ENCODE measurements at regions of chr3 and their contacts with region 1.

Region 1: DNA sequence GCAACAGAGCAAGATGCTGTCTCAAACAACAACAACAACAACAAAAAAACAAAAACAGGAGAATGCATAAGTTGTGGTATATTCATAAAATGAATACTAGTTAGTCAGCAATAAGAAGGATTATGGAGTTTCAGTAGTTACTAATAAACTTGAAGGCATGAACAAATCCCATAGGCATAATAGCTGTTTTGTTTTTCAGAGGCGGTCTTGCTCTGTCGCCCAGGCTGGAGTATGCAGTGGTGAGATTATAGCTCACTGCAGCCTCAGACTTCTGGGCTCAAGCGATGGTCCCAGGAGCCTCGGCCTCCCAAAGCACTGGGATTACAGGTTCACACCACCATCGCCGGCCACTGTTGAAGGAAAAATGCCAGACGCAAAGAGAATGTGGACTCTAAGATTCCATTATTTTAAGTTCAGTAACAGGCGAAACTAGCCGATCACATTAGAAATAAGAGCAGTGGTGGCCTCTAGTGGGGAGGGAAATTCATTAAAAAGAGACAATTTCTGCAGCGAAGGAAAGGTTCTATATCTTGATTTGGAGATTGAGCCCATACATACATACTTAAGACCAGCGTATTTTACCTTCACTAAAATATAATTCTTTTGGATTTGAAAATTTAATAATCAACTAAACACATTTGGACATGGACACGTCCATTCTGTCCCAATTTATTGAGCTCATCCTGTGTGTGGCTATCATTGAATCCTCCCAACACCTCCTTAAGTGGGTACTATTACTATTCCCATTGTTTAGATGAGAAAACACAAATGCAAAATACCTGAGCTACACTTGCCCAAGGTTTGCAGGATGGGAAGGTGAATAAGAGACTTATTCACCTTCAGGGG is 27.4 kb upstream of the HDAC11 start:
- DNase-seq: peak; percentile 74
- ATAC-seq: no peak
- H3K4me3 ChIP-seq: peak overlapping the region in 4 of 5 experiments; percentile 54 to 65 (median 59)
- H3K4me3 Mint-ChIP-seq: peak overlapping the region; percentile 87
- H3K27ac ChIP-seq: peak overlapping the region; percentile 67 to 78
- H3K27ac Mint-ChIP-seq: peak overlapping the region; percentile 84
- H3K4me1 ChIP-seq: peaks cover 6 to 16% of the 10 kb centered on the region in 2 donors
- H3K4me1 Mint-ChIP-seq: peaks cover 18% of the 10 kb centered on the region
- H3K27me3 ChIP-seq: no peaks in the 10 kb centered on the region
- H3K27me3 Mint-ChIP-seq: no peaks in the 10 kb centered on the region
- CTCF ChIP-seq: peak; percentile 84

Region 2: DNA sequence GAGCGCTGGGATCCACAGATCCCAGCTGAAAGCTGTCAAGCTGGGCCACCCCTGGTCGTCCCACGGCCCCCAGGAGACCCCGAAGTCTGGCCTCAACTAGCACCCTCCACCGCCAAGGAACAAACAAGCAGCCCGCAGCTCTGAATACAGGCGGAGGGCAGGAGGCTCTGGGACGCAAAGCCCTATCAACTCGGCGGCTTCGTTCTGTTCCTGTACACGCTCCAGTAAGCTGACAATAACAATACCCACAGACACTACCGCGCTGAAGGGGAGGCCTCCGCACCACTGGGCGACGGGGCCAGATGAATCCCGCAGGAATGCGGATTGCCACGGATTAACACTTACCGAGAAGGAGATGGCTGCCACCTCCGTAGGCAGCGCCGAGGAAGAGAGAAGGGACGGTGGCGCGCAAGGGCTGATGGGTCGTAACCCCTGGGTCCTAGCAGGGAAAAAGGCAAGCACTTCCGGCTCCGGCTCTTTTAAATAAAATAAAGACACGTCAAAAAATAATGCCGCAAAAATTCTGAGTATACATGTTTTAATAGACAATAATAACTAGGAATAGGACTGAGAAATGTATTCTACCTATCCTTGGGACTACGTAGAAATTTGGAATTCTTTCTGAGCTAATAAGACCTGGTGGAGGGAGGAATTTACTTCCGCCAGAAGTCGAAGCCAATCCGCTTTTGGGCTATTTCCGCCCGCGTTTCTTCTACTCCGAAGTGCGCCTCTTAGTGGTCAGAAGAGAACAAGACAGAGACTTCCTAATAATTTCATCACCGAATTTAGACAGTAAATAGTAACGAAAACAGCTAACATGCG is 611.4 kb before region 1 on chr3 and contains the start of gene RPL32:
- CTCF ChIA-PET with region 1: no interaction called
- POLR2A ChIA-PET with region 1: no interaction called
- intact Hi-C with region 1: loop called (anchors 1 kb)
- DNase-seq: peak; percentile 96
- ATAC-seq: peak; percentile 92
- H3K4me3 ChIP-seq: peak within 1 kb of the TSS; percentile 83 to 99 (median 90)
- H3K4me3 Mint-ChIP-seq: peak within 1 kb of the TSS; percentile 99
- H3K27ac ChIP-seq: peak within 1 kb of the TSS; percentile 96 to 97
- H3K27ac Mint-ChIP-seq: peak within 1 kb of the TSS; percentile 99
- H3K4me1 ChIP-seq: peaks cover 14 to 30% of the 10 kb centered on the region in 2 donors
- H3K4me1 Mint-ChIP-seq: peaks cover 45% of the 10 kb centered on the region
- H3K27me3 ChIP-seq: no peaks in the 10 kb centered on the region
- H3K27me3 Mint-ChIP-seq: no peaks in the 10 kb centered on the region
- CTCF ChIP-seq: peak; percentile 86
- total RNA-seq, gene RPL32: 2,575 and 2,756 TPM in 2 replicates

Region 3: DNA sequence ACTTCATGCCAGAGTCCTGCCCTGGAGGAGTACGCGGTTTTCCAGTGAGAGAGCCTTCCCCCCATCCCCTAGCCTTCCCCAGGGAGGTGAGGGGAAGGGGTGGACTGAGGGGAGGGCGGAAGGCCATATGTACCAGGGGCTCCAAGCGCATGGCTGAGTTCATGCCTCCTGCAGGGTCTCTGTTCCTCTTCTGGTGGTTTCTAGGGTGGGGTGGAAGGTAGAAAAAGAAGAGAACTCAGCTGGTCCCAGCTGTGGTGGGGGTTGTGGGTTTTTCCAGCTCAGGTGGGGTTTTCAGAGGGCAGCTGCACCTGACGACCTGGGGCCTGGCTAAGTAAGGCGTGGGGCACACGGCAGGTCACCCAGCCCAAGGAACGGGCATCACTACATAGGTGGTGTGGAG is 368.8 kb before region 1 on chr3:
- CTCF ChIA-PET with region 1: interaction called, 114 read pairs
- POLR2A ChIA-PET with region 1: interaction called, 6 read pairs
- intact Hi-C with region 1: no loop called
- DNase-seq: peak; percentile 89
- ATAC-seq: peak; percentile 58
- H3K4me3 ChIP-seq: peak overlapping the region in 1 of 5 experiments; percentile 17
- H3K4me3 Mint-ChIP-seq: peak overlapping the region; percentile 82
- H3K27ac ChIP-seq: peak overlapping the region; percentile 86 to 94
- H3K27ac Mint-ChIP-seq: peak overlapping the region; percentile 95
- H3K4me1 ChIP-seq: peaks cover 83 to 98% of the 10 kb centered on the region in 2 donors
- H3K4me1 Mint-ChIP-seq: peaks cover 90% of the 10 kb centered on the region
- H3K27me3 ChIP-seq: no peaks in the 10 kb centered on the region
- H3K27me3 Mint-ChIP-seq: no peaks in the 10 kb centered on the region
- CTCF ChIP-seq: no peak

Region 4: GRCh38 chr3:13282986-13283876 is 169.5 kb before region 1 on chr3:
- CTCF ChIA-PET with region 1: interaction called, 7 read pairs
- POLR2A ChIA-PET with region 1: no interaction called
- intact Hi-C with region 1: loop called (anchors 2 kb)
- DNase-seq: peak; percentile 62
- ATAC-seq: peak; percentile 74
- H3K4me3 ChIP-seq: peak overlapping the region in 4 of 5 experiments; percentile 3 to 47 (median 36)
- H3K4me3 Mint-ChIP-seq: peak overlapping the region; percentile 86
- H3K27ac ChIP-seq: no peak overlapping the region
- H3K27ac Mint-ChIP-seq: no peak overlapping the region
- H3K4me1 ChIP-seq: peaks cover 21% of the 10 kb centered on the region in 2 donors
- H3K4me1 Mint-ChIP-seq: peaks cover 13% of the 10 kb centered on the region
- H3K27me3 ChIP-seq: peaks cover 2 to 58% (median 37%) of the 10 kb centered on the region in 4 experiments
- H3K27me3 Mint-ChIP-seq: peaks cover 46% of the 10 kb centered on the region
- CTCF ChIP-seq: peak; percentile 49

Region 5: DNA sequence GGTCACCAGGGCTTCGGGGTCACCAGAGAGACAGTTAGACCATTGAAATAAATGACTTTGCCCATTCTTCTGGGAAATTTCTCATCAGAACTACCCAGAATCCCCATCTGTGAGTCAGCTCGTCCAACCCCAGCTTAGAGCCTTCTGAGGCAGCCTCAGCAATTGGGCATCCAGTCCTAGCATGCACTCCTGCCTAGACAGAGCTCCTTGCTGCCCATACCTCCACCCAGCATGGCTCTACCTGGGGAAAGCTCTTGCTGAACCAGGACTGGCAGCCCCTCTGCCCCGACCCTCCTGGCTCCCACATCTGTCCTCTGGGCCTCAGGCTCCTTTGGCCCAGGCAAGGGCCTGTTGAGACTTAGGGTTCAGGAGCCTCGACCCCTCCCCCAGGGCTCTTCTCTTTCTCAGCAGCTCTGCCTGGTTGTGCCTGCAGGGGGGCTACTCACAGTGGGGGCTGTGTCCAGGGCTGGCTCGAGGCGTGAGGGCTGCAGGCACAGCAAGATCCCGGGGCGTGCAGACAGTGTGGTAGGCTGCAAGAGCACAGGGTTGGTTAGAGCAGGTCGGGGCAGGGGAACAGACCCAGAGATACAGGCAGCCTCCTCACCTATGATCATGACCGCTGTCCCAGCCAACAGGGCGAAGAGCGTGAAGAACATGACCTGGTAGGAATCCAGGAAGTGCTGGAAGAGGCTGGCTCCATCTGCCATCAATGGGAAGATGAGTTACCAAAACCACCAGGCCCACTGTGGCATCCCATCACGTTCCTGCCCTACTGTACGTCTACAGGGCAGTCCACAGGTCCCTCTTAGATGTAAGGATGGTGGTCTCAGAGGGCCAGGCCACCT is 133.9 kb before region 1 on chr3:
- CTCF ChIA-PET with region 1: no interaction called
- POLR2A ChIA-PET with region 1: no interaction called
- intact Hi-C with region 1: no loop called
- DNase-seq: no peak
- ATAC-seq: no peak
- H3K4me3 ChIP-seq: no peak overlapping the region
- H3K4me3 Mint-ChIP-seq: no peak overlapping the region
- H3K27ac ChIP-seq: no peak overlapping the region
- H3K27ac Mint-ChIP-seq: no peak overlapping the region
- H3K4me1 ChIP-seq: no peaks in the 10 kb centered on the region
- H3K4me1 Mint-ChIP-seq: no peaks in the 10 kb centered on the region
- H3K27me3 ChIP-seq: no peaks in the 10 kb centered on the region
- H3K27me3 Mint-ChIP-seq: no peaks in the 10 kb centered on the region
- CTCF ChIP-seq: no peak

Region 6: GRCh38 chr3:13364602-13365271 is 88.0 kb before region 1 on chr3:
- CTCF ChIA-PET with region 1: interaction called, 11 read pairs
- POLR2A ChIA-PET with region 1: no interaction called
- intact Hi-C with region 1: no loop called
- DNase-seq: no peak
- ATAC-seq: no peak
- H3K4me3 ChIP-seq: no peak overlapping the region
- H3K4me3 Mint-ChIP-seq: no peak overlapping the region
- H3K27ac ChIP-seq: no peak overlapping the region
- H3K27ac Mint-ChIP-seq: no peak overlapping the region
- H3K4me1 ChIP-seq: no peaks in the 10 kb centered on the region
- H3K4me1 Mint-ChIP-seq: no peaks in the 10 kb centered on the region
- H3K27me3 ChIP-seq: no peaks in the 10 kb centered on the region
- H3K27me3 Mint-ChIP-seq: no peaks in the 10 kb centered on the region
- CTCF ChIP-seq: no peak

Region 7: DNA sequence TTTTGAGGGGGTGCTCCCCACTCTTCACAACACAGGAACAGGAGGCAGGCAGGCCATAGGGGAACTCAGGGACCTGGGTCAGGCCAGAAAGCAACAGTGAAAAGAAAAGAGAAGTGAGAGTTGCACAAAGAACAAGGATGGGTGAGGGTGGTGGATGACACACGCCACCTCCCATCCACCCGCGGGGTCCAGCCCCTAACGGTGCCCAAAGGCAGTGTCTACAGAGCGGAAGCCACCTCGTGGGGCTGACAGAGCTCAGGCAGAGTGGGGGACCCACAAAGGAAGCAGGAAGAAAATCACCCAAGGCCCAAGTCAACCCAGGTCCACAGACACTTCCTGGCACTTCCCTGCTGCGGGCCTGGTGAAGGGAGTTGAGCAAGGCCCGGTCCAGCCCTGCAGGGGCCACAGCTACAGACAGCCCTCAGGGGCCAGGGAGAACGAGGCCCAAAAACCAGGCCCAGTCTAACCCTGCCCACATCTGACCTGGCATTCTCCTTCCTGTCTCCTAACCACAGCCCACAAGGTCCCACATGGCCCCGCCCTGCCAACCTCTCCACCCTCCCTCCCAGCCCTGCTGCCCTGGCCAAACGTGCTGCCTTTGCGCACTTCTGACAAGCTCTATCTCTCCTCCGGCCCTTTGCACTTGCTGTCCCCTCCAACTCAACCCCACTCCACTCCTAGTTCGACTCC is 38.5 kb before region 1 on chr3:
- CTCF ChIA-PET with region 1: interaction called, 66 read pairs
- POLR2A ChIA-PET with region 1: interaction called, 18 read pairs
- intact Hi-C with region 1: loop called (anchors 1 kb)
- DNase-seq: peak; percentile 94
- ATAC-seq: peak; percentile 92
- H3K4me3 ChIP-seq: peak overlapping the region in 4 of 5 experiments; percentile 21 to 33 (median 29)
- H3K4me3 Mint-ChIP-seq: peak overlapping the region; percentile 73
- H3K27ac ChIP-seq: peak overlapping the region; percentile 90 to 91
- H3K27ac Mint-ChIP-seq: peak overlapping the region; percentile 98
- H3K4me1 ChIP-seq: peaks cover 60 to 72% of the 10 kb centered on the region in 2 donors
- H3K4me1 Mint-ChIP-seq: peaks cover 61% of the 10 kb centered on the region
- H3K27me3 ChIP-seq: no peaks in the 10 kb centered on the region
- H3K27me3 Mint-ChIP-seq: no peaks in the 10 kb centered on the region
- CTCF ChIP-seq: peak; percentile 26